Activated naive CD4-positive, alpha-beta T cell treated with anti-CD3 and anti-CD28 coated beads for 36 hours (primary cell): ENCODE measurements at regions of chr12 and their contacts with region 1.

Region 1: DNA sequence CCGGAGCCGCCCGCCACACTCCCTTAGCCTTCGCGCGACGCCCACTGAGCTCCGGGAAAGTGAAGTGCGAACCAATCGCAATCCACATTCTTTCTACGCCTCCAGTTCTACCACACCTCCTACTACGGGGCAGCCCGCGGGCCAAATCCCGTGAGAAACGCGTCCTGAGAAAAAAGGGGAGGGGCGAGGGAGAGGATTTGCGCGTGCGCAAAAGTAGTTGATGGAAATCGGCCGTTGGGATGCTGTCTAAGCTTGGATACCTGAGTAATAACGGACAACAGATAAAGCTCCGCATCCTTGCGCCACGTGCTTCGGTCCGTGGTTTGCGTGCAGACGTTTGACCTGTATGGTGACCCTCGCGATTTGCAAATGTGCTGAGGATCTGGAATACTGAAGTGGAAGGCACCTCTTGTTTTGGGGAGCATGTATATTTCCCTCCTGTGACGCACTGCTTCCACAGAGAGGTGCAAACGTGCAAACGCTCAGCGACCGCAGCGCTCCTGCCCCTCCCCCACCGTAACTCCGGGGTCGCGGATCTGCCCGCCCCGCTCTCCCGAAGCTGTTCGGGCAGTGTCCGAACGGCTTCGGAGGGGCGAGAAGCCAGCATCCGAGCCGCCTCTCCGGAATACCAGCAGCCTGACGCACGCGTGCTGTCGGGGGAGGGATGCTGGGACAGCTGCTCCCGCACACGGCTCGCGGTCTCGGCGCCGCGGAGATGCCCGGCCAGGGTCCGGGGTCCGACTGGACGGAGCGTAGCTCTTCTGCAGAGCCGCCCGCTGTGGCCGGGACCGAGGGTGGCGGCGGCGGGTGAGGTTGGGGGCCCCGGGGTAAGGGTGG is at the starts of genes FAM216A and GPN3:
- DNase-seq: peak; percentile 98
- H3K4me3 Mint-ChIP-seq: peak within 1 kb of the TSS; percentile 98
- H3K27ac Mint-ChIP-seq: peak within 1 kb of the TSS; percentile 96
- H3K4me1 Mint-ChIP-seq: peaks cover 41% of the 10 kb centered on the region
- H3K27me3 Mint-ChIP-seq: no peaks in the 10 kb centered on the region
- total RNA-seq, gene FAM216A: 37.0 to 39.5 TPM
- total RNA-seq, gene GPN3: 58.2 to 59.8 TPM

Region 2: DNA sequence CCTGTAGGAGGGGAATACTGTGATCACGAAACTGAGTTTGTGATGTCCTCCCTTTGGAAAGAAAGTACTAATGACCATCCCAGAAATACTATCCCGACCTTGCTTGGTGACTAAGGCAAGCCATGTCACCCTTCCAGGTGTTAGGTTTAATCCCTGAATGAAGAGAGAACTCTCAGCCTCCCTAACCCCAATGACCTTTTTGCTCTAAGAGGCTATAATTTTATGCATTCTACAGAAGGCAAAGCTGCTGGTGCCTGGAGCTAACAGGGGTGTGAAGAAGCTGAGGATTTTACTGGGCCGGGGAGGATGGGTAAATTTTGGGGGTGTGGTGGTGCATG is 412.3 kb before region 1 on chr12:
- CTCF ChIA-PET with region 1: no interaction called
- intact Hi-C with region 1: no loop called
- DNase-seq: no peak
- H3K4me3 Mint-ChIP-seq: no peak overlapping the region
- H3K27ac Mint-ChIP-seq: no peak overlapping the region
- H3K4me1 Mint-ChIP-seq: peaks cover 19% of the 10 kb centered on the region
- H3K27me3 Mint-ChIP-seq: no peaks in the 10 kb centered on the region

Region 3: GRCh38 chr12:110124184-110124995 is 344.0 kb before region 1 on chr12 and contains the start of gene IFT81:
- CTCF ChIA-PET with region 1: no interaction called
- intact Hi-C with region 1: loop called (anchors 5 kb)
- DNase-seq: peak; percentile 95
- H3K4me3 Mint-ChIP-seq: peak within 1 kb of the TSS; percentile 89
- H3K27ac Mint-ChIP-seq: no peak within 1 kb of the TSS
- H3K4me1 Mint-ChIP-seq: peaks cover 7% of the 10 kb centered on the region
- H3K27me3 Mint-ChIP-seq: peaks cover 2% of the 10 kb centered on the region
- total RNA-seq, gene IFT81: 1.7 to 2.2 TPM

Region 4: GRCh38 chr12:110449799-110450497 is 18.5 kb before region 1 on chr12 and contains the start of gene ARPC3:
- CTCF ChIA-PET with region 1: interaction called, 30 read pairs
- intact Hi-C with region 1: loop called (anchors 1 kb)
- DNase-seq: peak; percentile 98
- H3K4me3 Mint-ChIP-seq: peak within 1 kb of the TSS; percentile 100
- H3K27ac Mint-ChIP-seq: peak within 1 kb of the TSS; percentile 100
- H3K4me1 Mint-ChIP-seq: peaks cover 38% of the 10 kb centered on the region
- H3K27me3 Mint-ChIP-seq: no peaks in the 10 kb centered on the region
- total RNA-seq, gene ARPC3: 279 to 311 TPM

Region 5: GRCh38 chr12:110513842-110514241 is 45.4 kb after region 1 on chr12:
- CTCF ChIA-PET with region 1: interaction called, 11 read pairs
- intact Hi-C with region 1: no loop called
- DNase-seq: no peak
- H3K4me3 Mint-ChIP-seq: no peak overlapping the region
- H3K27ac Mint-ChIP-seq: no peak overlapping the region
- H3K4me1 Mint-ChIP-seq: peaks cover 2% of the 10 kb centered on the region
- H3K27me3 Mint-ChIP-seq: no peaks in the 10 kb centered on the region

Region 6: GRCh38 chr12:110583137-110584059 is 115.0 kb after region 1 on chr12 and contains the start of gene PPTC7:
- CTCF ChIA-PET with region 1: interaction called, 11 read pairs
- intact Hi-C with region 1: loop called (anchors 1 kb)
- DNase-seq: peak; percentile 99
- H3K4me3 Mint-ChIP-seq: peak within 1 kb of the TSS; percentile 90
- H3K27ac Mint-ChIP-seq: peak within 1 kb of the TSS; percentile 98
- H3K4me1 Mint-ChIP-seq: peaks cover 59% of the 10 kb centered on the region
- H3K27me3 Mint-ChIP-seq: no peaks in the 10 kb centered on the region
- total RNA-seq, gene PPTC7: 41.1 to 43.2 TPM

Region 7: DNA sequence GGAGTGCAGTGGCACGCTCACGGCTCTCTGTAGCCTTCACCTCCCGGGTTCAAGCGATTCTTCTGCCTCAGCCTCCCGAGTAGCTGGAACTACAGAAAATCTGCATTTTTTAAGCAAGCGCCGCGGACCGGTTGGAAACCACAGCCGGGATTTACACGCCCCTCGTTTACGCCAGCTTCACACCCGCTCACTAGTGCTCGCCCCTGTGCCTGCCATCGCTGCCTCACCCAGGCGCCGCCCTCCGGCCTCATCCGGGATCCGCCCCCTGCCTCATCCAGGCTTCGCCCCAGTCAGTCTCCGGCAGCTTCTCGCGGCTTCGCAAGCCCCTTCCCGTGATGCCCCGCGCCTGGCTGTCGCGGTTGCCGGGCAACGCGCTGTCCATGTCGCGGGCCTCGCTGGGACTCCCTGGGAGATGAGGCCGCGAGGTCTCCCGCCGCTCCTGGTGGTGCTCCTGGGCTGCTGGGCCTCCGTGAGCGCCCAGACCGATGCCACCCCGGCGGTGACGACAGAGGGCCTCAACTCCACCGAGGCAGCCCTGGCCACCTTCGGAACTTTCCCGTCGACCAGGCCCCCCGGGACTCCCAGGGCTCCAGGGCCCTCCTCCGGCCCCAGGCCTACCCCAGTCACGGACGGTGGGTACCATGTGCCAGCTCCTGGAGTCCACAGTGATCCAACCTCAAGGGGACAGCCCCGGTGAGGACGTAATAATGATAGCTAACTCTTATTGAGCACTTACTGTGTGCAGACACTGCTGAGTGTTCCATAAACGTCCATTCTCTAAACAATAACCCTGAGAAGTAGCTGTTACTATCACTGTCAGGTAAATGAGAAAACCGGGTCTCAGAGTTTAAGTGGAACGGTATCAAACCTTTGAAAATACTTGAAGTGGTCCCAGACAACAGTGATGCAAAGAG is 145.6 kb after region 1 on chr12 and contains the start of gene TCTN1:
- CTCF ChIA-PET with region 1: interaction called, 6 read pairs
- intact Hi-C with region 1: loop called (anchors 1 kb)
- DNase-seq: peak; percentile 98
- H3K4me3 Mint-ChIP-seq: peak within 1 kb of the TSS; percentile 84
- H3K27ac Mint-ChIP-seq: peak within 1 kb of the TSS; percentile 84
- H3K4me1 Mint-ChIP-seq: peaks cover 13% of the 10 kb centered on the region
- H3K27me3 Mint-ChIP-seq: no peaks in the 10 kb centered on the region
- total RNA-seq, gene TCTN1: 5.2 to 5.8 TPM

Region 8: GRCh38 chr12:110888256-110888991 is 420.0 kb after region 1 on chr12:
- CTCF ChIA-PET with region 1: no interaction called
- intact Hi-C with region 1: loop called (anchors 5 kb)
- DNase-seq: no peak
- H3K4me3 Mint-ChIP-seq: no peak overlapping the region
- H3K27ac Mint-ChIP-seq: no peak overlapping the region
- H3K4me1 Mint-ChIP-seq: peaks cover 8% of the 10 kb centered on the region
- H3K27me3 Mint-ChIP-seq: no peaks in the 10 kb centered on the region

Region 9: DNA sequence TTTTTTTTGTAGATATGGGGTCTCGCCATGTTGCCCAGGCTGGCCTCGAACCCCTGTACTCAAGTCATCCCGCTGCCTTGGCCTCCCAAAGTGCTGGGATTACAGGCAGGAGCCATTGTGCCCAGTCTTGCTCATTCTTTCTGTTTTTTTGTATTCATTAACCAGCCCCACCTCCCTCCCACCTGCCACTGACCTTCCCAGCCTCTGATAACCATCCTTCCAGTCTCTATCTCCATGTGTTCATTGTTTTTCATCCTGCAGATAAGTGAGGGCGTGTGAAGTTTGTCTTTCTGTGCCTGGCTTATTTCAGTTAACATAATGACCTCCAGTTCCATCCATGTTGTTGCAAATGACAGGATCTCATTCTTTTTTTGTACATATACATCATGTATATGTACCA is 433.0 kb after region 1 on chr12:
- CTCF ChIA-PET with region 1: no interaction called
- intact Hi-C with region 1: no loop called
- DNase-seq: no peak
- H3K4me3 Mint-ChIP-seq: no peak overlapping the region
- H3K27ac Mint-ChIP-seq: no peak overlapping the region
- H3K4me1 Mint-ChIP-seq: peaks cover 3% of the 10 kb centered on the region
- H3K27me3 Mint-ChIP-seq: no peaks in the 10 kb centered on the region